K562 (cell line): ENCODE measurements at regions of chr14 and their contacts with region 1.

Region 1: DNA sequence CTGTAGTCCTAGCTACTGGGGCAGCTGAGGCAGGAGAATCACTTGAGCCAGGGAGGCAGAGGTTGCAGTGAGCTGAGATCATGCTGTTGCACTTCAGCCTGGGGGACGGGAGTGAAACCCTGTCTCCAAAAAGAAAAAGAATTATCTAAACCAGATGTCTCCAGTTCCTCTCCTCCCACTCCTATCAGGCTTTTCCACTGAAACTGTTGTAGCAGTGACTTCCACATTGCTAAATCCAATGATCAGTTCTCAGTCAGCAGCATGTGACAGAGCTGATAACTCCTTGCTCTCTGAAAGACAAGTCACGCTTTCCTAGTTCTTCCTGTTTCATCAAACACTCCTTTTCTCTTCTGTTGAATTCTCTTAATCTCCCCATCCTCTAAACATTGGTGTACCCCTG is 8.6 kb downstream of the SLC38A6 start:
- DNase-seq: peak; percentile 23 to 84 (median 48)
- ATAC-seq: peak; percentile 91
- H3K4me3 ChIP-seq: no peak overlapping the region
- H3K27ac ChIP-seq: peak overlapping the region; percentile 65; the same call in 2 of the 3 replicates
- H3K4me1 ChIP-seq: peaks cover 6 to 27% of the 10 kb centered on the region in 2 experiments
- H3K27me3 ChIP-seq: no peaks in the 10 kb centered on the region
- CTCF ChIP-seq: no peak
- EP300 ChIP-seq: peak; percentile 93
- POLR2A ChIP-seq: no peak
- RAD21 ChIP-seq: no peak

Region 2: GRCh38 chr14:60724137-60724619 is 265.4 kb before region 1 on chr14 and contains the start of gene SIX4:
- CTCF ChIA-PET with region 1: no interaction called
- POLR2A ChIA-PET with region 1: no interaction called
- in situ Hi-C with region 1: no loop called
- intact Hi-C with region 1: loop called (anchors 5 kb)
- DNase-seq: peak; percentile 82 to 87 (median 84)
- ATAC-seq: peak; percentile 94
- H3K4me3 ChIP-seq: peak within 1 kb of the TSS; percentile 67
- H3K27ac ChIP-seq: peak within 1 kb of the TSS; percentile 81
- H3K4me1 ChIP-seq: peaks cover 3 to 27% of the 10 kb centered on the region in 2 experiments; a peak in 4 of 5 replicates
- H3K27me3 ChIP-seq: no peaks in the 10 kb centered on the region
- CTCF ChIP-seq: no peak
- EP300 ChIP-seq: no peak
- POLR2A ChIP-seq: peak; percentile 88
- RAD21 ChIP-seq: no peak
- polyA plus RNA-seq, gene SIX4: 0.77 to 1.1 TPM